ENCODE measurements at regions of chr2 and their contacts with region 1.

Region 1: DNA sequence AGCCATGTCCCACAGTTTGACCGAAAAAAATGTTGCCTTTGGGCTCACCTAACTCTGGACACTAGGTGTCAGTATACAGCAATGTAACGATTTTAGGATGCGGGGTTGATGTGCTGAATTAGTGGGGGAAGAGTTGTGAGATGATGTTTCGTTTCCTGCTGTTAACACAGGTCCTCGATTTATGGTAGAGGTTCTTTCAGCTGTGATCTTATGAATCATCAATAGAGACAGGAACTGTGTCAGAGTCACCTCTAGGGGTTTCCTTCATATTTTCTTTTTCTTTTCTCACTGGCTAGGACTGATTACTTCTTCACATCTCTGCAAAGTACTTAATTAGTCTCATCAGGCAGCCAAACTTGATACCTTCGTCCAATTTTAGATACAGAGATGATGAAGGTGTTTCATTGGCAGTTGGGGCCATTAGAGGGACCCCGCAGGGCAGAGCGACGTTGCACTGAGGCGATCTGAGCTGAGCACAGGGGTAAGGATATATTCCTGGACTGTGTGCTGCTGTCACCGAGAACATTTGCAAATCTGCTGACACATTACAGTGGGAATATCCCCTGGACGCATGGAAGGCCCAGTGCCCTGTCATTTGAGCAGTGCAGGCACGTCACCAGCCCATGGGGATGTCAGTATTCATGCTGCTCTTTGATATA is 10.2 kb upstream of the MMADHC start:
- DNase-seq: peak; percentile 66
- H3K4me3 Mint-ChIP-seq: no peak overlapping the region
- H3K27ac Mint-ChIP-seq: no peak overlapping the region
- H3K4me1 Mint-ChIP-seq: peaks cover 37% of the 10 kb centered on the region
- H3K27me3 Mint-ChIP-seq: no peaks in the 10 kb centered on the region
- CTCF ChIP-seq: peak; percentile 62

Region 2: DNA sequence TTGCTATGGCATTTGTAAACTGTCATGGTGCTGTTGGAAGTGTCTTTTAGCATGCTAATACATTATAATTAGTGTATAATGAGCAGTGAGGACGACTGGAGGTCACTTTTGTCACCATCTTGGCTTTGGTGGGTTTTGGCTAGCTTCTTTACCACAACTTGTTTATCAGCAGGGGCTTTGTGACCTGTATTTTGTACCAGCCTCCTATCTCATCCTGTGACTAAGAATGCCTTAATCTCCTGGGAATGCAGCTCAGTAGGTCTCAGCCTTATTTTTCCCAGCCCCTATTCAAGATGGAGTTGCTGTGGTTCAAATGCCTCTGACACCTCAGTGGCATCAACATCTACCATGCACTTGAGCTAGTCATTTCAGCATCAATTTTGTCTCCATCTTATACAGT is 237.7 kb before region 1 on chr2:
- CTCF ChIA-PET with region 1: no interaction called
- intact Hi-C with region 1: no loop called
- DNase-seq: no peak
- H3K4me3 Mint-ChIP-seq: no peak overlapping the region
- H3K27ac Mint-ChIP-seq: no peak overlapping the region
- H3K4me1 Mint-ChIP-seq: no peaks in the 10 kb centered on the region
- H3K27me3 Mint-ChIP-seq: no peaks in the 10 kb centered on the region
- CTCF ChIP-seq: no peak

Region 3: DNA sequence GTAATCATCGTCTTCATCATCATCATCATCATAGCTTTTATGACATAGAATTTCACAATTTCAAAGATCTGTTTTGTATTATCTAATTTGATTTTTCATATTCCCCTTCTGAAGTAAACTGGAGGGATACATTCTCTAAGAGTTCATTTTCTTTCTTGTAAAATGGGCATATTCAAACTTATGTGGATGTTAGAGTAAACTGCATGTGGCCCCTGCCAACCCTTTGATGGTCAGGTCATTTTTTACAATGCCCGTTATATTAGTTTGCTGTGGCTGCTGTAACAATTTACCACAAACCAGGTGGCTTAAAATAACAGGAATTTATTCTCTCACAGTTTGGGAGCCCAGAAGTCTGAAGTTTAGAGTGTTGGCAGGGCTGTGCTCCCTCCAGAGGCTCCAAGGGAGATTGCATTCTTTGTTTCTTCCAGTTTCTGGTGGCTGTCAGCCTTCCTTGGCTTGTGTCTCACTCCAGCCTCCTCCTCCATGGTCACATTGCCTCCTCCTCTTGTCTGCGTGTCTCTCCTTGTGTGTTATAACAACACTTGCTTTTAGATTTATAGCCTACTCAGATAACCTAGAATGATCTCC is 117.3 kb after region 1 on chr2:
- CTCF ChIA-PET with region 1: no interaction called
- intact Hi-C with region 1: loop called (anchors 1 kb)
- DNase-seq: peak; percentile 23
- H3K4me3 Mint-ChIP-seq: no peak overlapping the region
- H3K27ac Mint-ChIP-seq: no peak overlapping the region
- H3K4me1 Mint-ChIP-seq: no peaks in the 10 kb centered on the region
- H3K27me3 Mint-ChIP-seq: no peaks in the 10 kb centered on the region
- CTCF ChIP-seq: peak; percentile 69

Region 4: GRCh38 chr2:150133623-150134022 is 535.8 kb after region 1 on chr2:
- CTCF ChIA-PET with region 1: no interaction called
- intact Hi-C with region 1: loop called (anchors 2 kb)
- DNase-seq: peak; percentile 62
- H3K4me3 Mint-ChIP-seq: peak overlapping the region; percentile 23
- H3K27ac Mint-ChIP-seq: peak overlapping the region; percentile 71
- H3K4me1 Mint-ChIP-seq: peaks cover 57% of the 10 kb centered on the region
- H3K27me3 Mint-ChIP-seq: no peaks in the 10 kb centered on the region
- CTCF ChIP-seq: no peak

Region 5: GRCh38 chr2:150610671-150611279 is 1013.0 kb after region 1 on chr2:
- CTCF ChIA-PET with region 1: interaction called, 3 read pairs
- intact Hi-C with region 1: loop called (anchors 1 kb)
- DNase-seq: peak; percentile 64
- H3K4me3 Mint-ChIP-seq: no peak overlapping the region
- H3K27ac Mint-ChIP-seq: no peak overlapping the region
- H3K4me1 Mint-ChIP-seq: peaks cover 23% of the 10 kb centered on the region
- H3K27me3 Mint-ChIP-seq: no peaks in the 10 kb centered on the region
- CTCF ChIP-seq: peak; percentile 66

Region 6: GRCh38 chr2:151176661-151177060 is 1578.9 kb after region 1 on chr2:
- CTCF ChIA-PET with region 1: no interaction called
- intact Hi-C with region 1: loop called (anchors 10 kb)
- DNase-seq: no peak
- H3K4me3 Mint-ChIP-seq: no peak overlapping the region
- H3K27ac Mint-ChIP-seq: no peak overlapping the region
- H3K4me1 Mint-ChIP-seq: no peaks in the 10 kb centered on the region
- H3K27me3 Mint-ChIP-seq: peaks cover 48% of the 10 kb centered on the region
- CTCF ChIP-seq: no peak